Activated T-helper 2 cell treated with anti-CD3 and anti-CD28 coated beads, Interferon-gamma antibody, Interleukin-2, Interleukin-4, amounts not matched to agents 10 μg/mL and 5 μg/mL and 100 μg/mL, durations not matched to agents 14 hours and 24 hours and 36 hours (primary cell): ENCODE measurements at regions of chr12 and their contacts with region 1.

Region 1: DNA sequence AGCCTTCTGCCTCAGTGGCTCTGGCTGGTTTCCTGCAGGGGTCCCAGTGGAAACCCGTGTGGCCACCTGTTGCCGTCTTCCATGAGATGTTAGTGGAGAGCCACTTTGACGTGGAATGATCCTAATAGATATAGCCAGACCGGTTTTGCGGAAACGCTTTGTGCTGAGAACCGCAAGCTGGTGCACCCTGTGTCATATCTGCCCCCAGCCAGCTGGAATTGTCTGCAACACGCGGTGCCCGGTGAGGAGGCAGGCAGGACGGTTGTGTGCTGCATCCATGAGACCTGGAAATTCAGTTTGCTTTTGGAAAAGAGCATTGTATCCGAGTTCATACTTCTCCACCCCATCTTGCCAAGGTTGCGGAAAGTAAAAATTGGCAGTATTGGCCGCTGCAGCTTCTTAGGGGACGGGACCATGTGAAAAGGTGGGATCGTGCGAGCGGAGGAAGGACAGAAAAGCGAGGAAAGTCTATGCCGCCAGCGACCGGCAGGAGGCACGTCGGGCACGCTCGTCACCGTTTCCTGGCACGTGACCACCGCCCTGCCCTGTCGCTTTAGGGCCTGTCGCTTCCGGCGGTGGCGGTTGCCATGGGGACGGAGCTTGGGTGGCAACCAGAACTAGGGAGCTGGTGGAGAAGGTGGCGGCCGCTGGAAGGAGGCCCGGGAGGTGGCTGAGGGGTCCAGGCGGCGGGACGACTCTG is at the start of gene CFAP251:
- DNase-seq: peak; percentile 93
- H3K4me3 Mint-ChIP-seq: peak within 1 kb of the TSS; percentile 82
- H3K27ac Mint-ChIP-seq: peak within 1 kb of the TSS; percentile 85
- H3K4me1 Mint-ChIP-seq: peaks cover 15% of the 10 kb centered on the region
- H3K27me3 Mint-ChIP-seq: no peaks in the 10 kb centered on the region
- total RNA-seq, gene CFAP251: 0.80 and 0.82 TPM in 2 replicates

Region 2: DNA sequence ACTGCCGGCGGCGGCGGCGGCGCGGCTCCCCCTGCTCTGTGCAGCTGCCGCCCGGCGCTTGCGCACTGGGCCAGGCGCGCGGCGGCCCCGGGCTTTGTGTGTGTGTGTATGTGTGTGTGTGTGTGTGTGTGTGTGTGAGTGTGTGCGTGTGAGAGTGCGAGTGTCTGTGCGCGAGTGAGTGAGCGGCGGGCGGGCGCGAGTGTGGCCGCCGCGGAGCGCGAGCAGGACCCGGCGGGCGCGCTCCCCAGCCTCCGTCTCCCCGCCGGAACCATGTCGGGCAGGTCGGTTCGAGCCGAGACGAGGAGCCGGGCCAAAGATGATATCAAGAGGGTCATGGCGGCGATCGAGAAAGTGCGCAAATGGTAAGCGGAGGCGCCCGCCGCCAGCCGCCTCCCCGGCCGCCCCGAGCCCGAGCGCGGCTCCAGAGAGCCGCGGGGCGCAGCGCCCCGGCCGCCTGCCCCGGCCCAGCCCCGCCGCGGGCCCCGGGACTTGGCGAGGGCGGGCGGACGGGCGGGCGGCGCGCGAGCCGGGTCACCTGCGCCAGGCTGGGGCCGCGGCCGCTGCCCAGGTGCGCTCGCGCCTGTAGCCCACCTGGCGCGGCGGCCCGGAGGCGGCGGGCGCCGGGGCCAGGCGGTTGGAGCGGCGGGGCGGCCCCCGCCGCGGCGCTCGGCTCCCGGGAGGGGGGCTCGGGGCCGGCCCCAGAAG is 103.8 kb after region 1 on chr12 and contains the start of gene BCL7A:
- intact Hi-C with region 1: loop called (anchors 5 kb)
- DNase-seq: peak; percentile 56
- H3K4me3 Mint-ChIP-seq: peak within 1 kb of the TSS; percentile 91
- H3K27ac Mint-ChIP-seq: peak within 1 kb of the TSS; percentile 86
- H3K4me1 Mint-ChIP-seq: peaks cover 8% of the 10 kb centered on the region
- H3K27me3 Mint-ChIP-seq: peaks cover 12% of the 10 kb centered on the region
- total RNA-seq, gene BCL7A: 11.4 and 12.5 TPM in 2 replicates